ENCODE measurements at regions of chr15 and their contacts with region 1.

Region 1: DNA sequence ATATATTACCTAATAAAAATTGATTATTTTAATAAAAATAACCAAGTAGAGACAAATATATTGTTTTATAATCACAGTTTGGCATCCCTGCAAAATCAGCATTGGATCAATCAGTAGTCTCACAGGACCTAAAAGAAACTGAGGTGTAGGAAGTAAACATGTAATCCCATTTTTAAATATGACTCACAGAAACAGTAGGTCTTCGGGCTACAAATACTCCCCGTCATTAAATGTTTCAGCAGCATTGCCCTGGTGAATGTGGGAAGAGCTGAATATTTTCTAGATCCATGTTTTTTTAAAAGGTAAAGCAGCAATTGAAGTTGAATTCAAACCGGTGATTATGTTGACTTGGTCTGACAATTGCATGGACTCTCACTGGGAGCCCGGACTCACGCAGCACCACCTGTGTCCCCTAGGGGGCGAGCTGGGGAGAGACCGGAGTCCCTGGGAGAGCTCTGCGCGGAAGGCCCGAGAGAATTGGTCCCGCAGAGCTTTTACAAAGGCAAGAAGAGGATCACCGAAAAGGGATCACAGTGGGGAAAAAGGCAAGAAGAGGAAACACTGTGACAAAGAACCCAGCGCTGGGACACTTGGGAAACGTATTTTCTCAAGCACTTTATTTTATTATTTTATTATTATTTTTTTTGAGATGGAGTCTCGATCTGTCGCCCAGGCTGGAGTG is 17.2 kb upstream of the USP3 start:
- DNase-seq: peak; percentile 86
- H3K4me3 ChIP-seq: peak overlapping the region in 1 of 2 experiments; percentile 41; a peak in 1 of 4 replicates
- H3K27ac ChIP-seq: no peak overlapping the region
- H3K4me1 ChIP-seq: peaks cover 0 to 5% of the 10 kb centered on the region in 2 experiments; a peak in 1 of 4 replicates
- H3K27me3 ChIP-seq: no peaks in the 10 kb centered on the region
- CTCF ChIP-seq: peak; percentile 87
- EP300 ChIP-seq: no peak
- RAD21 ChIP-seq: peak; percentile 75

Region 2: GRCh38 chr15:63296195-63296594 is 191.0 kb before region 1 on chr15:
- CTCF ChIA-PET with region 1: no interaction called
- POLR2A ChIA-PET with region 1: no interaction called
- DNase-seq: no peak
- H3K4me3 ChIP-seq: no peak overlapping the region
- H3K27ac ChIP-seq: no peak overlapping the region
- H3K4me1 ChIP-seq: peaks cover 0 to under 1% of the 10 kb centered on the region in 2 experiments; a peak in 1 of 4 replicates
- H3K27me3 ChIP-seq: no peaks in the 10 kb centered on the region
- CTCF ChIP-seq: no peak
- EP300 ChIP-seq: no peak
- RAD21 ChIP-seq: no peak

Region 3: GRCh38 chr15:63497642-63498467 is 10.6 kb after region 1 on chr15:
- CTCF ChIA-PET with region 1: interaction called, 36 read pairs
- POLR2A ChIA-PET with region 1: interaction called, 3 read pairs
- DNase-seq: no peak
- H3K4me3 ChIP-seq: no peak overlapping the region
- H3K27ac ChIP-seq: no peak overlapping the region
- H3K4me1 ChIP-seq: peaks cover 2 to 6% of the 10 kb centered on the region in 2 experiments; a peak in 2 of 4 replicates
- H3K27me3 ChIP-seq: no peaks in the 10 kb centered on the region
- CTCF ChIP-seq: no peak
- EP300 ChIP-seq: no peak
- RAD21 ChIP-seq: no peak

Region 4: GRCh38 chr15:63504247-63504978 is 17.2 kb after region 1 on chr15 and contains the start of gene USP3:
- CTCF ChIA-PET with region 1: interaction called, 10 read pairs
- POLR2A ChIA-PET with region 1: no interaction called
- DNase-seq: peak; percentile 98
- H3K4me3 ChIP-seq: peak within 1 kb of the TSS; percentile 90 to 91
- H3K27ac ChIP-seq: peak within 1 kb of the TSS; percentile 84 to 93
- H3K4me1 ChIP-seq: peaks cover 22 to 30% of the 10 kb centered on the region in 2 experiments; a peak in 3 of 4 replicates
- H3K27me3 ChIP-seq: no peaks in the 10 kb centered on the region
- CTCF ChIP-seq: no peak
- EP300 ChIP-seq: no peak
- RAD21 ChIP-seq: peak; percentile 29; the same call in 1 of the 2 replicates
- polyA plus RNA-seq, gene USP3: 9.3 and 10.8 TPM in 2 replicates

Measured in SK-N-SH (cell line).